ENCODE measurements at regions of chr1 and their contacts with region 1.

Region 1: GRCh38 chr1:180482425-180483275 is 19.7 kb downstream of the ACBD6 start:
- DNase-seq: peak; percentile 79
- H3K4me3 Mint-ChIP-seq: no peak overlapping the region
- H3K27ac Mint-ChIP-seq: no peak overlapping the region
- H3K4me1 Mint-ChIP-seq: peaks cover 17% of the 10 kb centered on the region
- H3K27me3 Mint-ChIP-seq: no peaks in the 10 kb centered on the region
- CTCF ChIP-seq: peak; percentile 68

Region 2: GRCh38 chr1:180188091-180188506 is 294.6 kb before region 1 on chr1:
- CTCF ChIA-PET with region 1: interaction called, 55 read pairs
- POLR2A ChIA-PET with region 1: interaction called, 4 read pairs
- intact Hi-C with region 1: loop called (anchors 1 kb)
- DNase-seq: peak; percentile 74
- H3K4me3 Mint-ChIP-seq: no peak overlapping the region
- H3K27ac Mint-ChIP-seq: no peak overlapping the region
- H3K4me1 Mint-ChIP-seq: no peaks in the 10 kb centered on the region
- H3K27me3 Mint-ChIP-seq: no peaks in the 10 kb centered on the region
- CTCF ChIP-seq: peak; percentile 57

Region 3: GRCh38 chr1:180262572-180263488 is 219.8 kb before region 1 on chr1:
- CTCF ChIA-PET with region 1: interaction called, 10 read pairs
- POLR2A ChIA-PET with region 1: interaction called, 4 read pairs
- intact Hi-C with region 1: no loop called
- DNase-seq: no peak
- H3K4me3 Mint-ChIP-seq: no peak overlapping the region
- H3K27ac Mint-ChIP-seq: no peak overlapping the region
- H3K4me1 Mint-ChIP-seq: no peaks in the 10 kb centered on the region
- H3K27me3 Mint-ChIP-seq: peaks cover 38% of the 10 kb centered on the region
- CTCF ChIP-seq: no peak

Region 4: DNA sequence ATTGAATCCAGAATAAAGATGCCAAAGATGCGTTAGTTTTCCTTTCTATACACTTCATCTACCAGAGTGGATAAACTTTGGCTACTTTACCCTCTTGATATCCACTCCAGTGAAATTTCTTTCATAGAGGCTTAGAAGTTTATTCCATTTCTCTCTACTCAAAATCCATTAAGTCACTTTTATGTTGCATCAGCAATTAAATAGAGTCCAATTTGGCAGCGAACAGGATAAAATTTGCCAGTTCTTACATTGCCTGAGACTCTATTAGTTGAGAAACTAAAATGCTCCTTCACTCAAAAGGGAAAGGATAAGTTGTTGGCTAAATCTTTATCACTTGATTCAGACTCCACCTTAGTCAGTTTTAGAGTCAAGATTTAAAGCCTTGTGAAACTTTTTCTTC is 38.1 kb before region 1 on chr1:
- CTCF ChIA-PET with region 1: interaction called, 11 read pairs
- POLR2A ChIA-PET with region 1: interaction called, 4 read pairs
- intact Hi-C with region 1: no loop called
- DNase-seq: no peak
- H3K4me3 Mint-ChIP-seq: no peak overlapping the region
- H3K27ac Mint-ChIP-seq: no peak overlapping the region
- H3K4me1 Mint-ChIP-seq: no peaks in the 10 kb centered on the region
- H3K27me3 Mint-ChIP-seq: no peaks in the 10 kb centered on the region
- CTCF ChIP-seq: no peak

Region 5: GRCh38 chr1:180468311-180468710 is 14.3 kb before region 1 on chr1:
- CTCF ChIA-PET with region 1: interaction called, 91 read pairs
- POLR2A ChIA-PET with region 1: interaction called, 4 read pairs
- intact Hi-C with region 1: no loop called
- DNase-seq: no peak
- H3K4me3 Mint-ChIP-seq: no peak overlapping the region
- H3K27ac Mint-ChIP-seq: no peak overlapping the region
- H3K4me1 Mint-ChIP-seq: no peaks in the 10 kb centered on the region
- H3K27me3 Mint-ChIP-seq: no peaks in the 10 kb centered on the region
- CTCF ChIP-seq: no peak

Region 6: DNA sequence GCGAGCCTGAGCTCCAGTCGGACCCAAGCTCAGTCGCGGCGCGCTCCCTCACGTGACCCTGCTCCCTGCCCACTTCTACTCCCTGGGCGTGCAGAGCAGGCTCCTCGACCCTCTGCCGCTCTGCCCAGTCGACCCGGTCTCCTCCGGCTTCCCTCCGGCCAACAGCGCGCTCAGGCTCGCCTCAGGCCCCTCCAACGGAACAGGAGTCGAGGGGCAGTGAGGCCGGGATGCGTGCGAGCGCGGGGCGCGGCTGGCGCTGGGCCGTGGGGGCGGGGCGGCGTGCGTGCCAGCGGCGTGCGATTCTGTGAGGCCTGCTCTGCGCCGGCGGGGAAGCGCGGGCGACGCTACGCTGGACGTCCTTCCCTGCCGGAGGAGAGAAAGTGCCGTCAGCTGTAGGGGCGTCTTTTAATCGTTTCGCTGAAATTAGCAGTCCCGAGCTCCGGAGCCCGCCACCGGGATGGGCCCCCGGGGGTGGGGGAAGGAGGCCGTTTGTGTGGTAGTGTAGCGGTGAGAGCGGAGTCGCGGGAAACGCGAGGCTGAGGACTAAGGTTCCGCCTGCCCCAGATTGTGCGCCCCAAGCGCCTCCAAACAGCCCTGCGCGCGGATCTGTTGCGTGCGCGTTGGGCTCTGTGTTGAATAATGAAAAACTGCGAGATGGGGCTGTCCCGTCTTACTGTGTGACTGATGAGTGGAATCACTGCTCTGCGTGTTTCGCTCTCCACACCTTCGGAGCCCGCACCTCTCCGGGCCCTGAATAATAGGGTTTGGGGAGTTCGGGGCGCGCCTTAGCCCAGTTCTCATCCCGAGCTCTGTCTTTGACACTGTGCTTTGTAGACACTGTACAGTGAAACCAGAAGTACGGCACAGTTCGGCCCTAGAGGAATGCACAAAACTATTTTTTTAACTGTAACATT is 20.0 kb after region 1 on chr1 and contains the start of gene ACBD6:
- CTCF ChIA-PET with region 1: interaction called, 22 read pairs
- POLR2A ChIA-PET with region 1: interaction called, 6 read pairs
- intact Hi-C with region 1: no loop called
- DNase-seq: peak; percentile 94
- H3K4me3 Mint-ChIP-seq: peak within 1 kb of the TSS; percentile 94
- H3K27ac Mint-ChIP-seq: peak within 1 kb of the TSS; percentile 97
- H3K4me1 Mint-ChIP-seq: peaks cover 29% of the 10 kb centered on the region
- H3K27me3 Mint-ChIP-seq: no peaks in the 10 kb centered on the region
- CTCF ChIP-seq: no peak
- total RNA-seq, gene ACBD6: 123 and 136 TPM in 2 replicates